Sciatic nerve (tissue), 2 donors: ENCODE measurements at regions of chr10 and their contacts with region 1.

Region 1: DNA sequence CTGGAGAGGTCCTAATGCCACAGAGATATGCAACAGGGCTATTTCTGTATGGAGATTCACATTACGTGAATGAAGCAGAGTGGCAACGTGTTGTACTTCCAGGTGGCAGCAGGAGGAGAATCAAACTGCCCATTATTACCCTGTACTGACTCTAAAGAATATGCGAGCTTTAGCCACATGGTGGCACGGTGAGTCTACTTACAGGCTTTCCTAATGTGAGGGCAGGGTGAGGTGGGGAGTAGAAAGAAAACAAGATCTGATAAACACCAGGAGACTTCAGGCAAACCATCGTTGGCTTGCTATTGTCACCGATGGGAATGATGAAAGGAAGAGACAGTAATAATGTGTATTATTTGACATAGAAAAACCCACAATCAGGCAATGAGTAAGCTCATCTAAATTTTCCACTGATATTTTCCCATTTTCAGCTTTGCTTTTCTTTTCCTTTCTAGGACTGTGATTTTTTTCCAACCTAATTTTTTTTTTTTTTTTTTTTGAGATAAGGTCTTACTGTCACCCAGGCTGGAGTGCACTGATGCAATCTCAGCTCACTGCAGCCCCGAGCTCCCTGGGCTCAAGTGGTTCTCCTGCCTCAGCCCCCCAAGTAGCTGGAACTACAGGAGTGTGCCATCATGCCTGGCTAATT is 164.3 kb downstream of the BTAF1 start:
- DNase-seq: peak; percentile 71
- ATAC-seq: peak; percentile 96

Region 2: GRCh38 chr10:92014620-92015019 is 73.3 kb before region 1 on chr10:
- intact Hi-C with region 1: no loop called
- DNase-seq: no peak
- ATAC-seq: no peak

Region 3: DNA sequence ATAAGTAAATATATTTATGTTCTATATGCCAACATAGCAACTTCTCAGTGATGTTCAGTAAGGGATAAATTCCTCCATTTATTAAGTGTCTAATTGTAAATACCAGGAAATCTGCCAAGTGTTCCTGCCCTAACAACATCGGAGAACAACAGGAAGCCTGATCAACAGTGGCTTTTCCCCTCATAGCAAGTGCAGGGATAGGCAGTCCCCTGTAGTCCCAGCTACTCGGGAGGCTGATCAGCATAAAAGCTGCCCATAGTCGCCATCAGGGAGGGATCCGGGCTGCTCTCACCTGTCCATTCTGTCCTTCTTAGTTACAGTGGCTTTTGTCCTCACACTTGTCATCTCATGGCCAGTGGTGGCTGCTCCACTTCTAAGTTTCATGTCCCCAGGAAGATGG is 344.7 kb after region 1 on chr10:
- intact Hi-C with region 1: loop called (anchors 10 kb)
- DNase-seq: no peak
- ATAC-seq: no peak